Endothelial cell of umbilical vein (primary cell): ENCODE measurements at regions of chr15 and their contacts with region 1.

Region 1: DNA sequence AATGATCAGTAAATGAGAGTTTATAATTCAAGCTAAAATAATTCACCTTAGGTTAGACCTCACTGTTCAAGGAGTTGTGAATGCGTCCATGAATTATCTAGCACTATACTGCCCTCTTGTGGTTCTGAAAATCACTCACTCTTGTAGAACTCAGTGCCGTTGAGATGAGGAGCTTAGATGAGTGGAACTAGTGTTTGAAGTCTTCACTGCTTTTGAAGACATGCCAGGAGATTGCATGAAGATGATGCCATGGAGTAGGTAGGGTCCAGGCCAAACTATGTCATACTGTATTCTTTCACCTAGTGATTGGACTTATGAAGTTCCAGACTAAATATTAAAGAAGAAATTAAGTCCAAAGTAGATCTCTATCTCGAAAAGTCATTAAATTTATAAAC is 28.8 kb downstream of the LYSMD4 start:
- DNase-seq: peak; percentile 92
- H3K4me3 ChIP-seq: no peak overlapping the region
- H3K27ac ChIP-seq: peak overlapping the region; percentile 75
- H3K4me1 ChIP-seq: peaks cover 46% of the 10 kb centered on the region
- H3K27me3 ChIP-seq: no peaks in the 10 kb centered on the region
- CTCF ChIP-seq: peak; percentile 50 to 61
- POLR2A ChIP-seq: no peak

Region 2: GRCh38 chr15:99250494-99251435 is 453.7 kb before region 1 on chr15:
- CTCF ChIA-PET with region 1: interaction called, 19 read pairs
- POLR2A ChIA-PET with region 1: no interaction called
- dilution Hi-C with region 1: no loop called
- intact Hi-C with region 1: loop called (anchors 1 kb)
- DNase-seq: peak; percentile 100
- H3K4me3 ChIP-seq: peak overlapping the region; percentile 77 to 100 (median 80)
- H3K27ac ChIP-seq: peak overlapping the region; percentile 89
- H3K4me1 ChIP-seq: peaks cover 30% of the 10 kb centered on the region
- H3K27me3 ChIP-seq: no peaks in the 10 kb centered on the region
- CTCF ChIP-seq: no peak
- POLR2A ChIP-seq: peak; percentile 89

Region 3: GRCh38 chr15:99333413-99333812 is 371.0 kb before region 1 on chr15:
- CTCF ChIA-PET with region 1: interaction called, 103 read pairs
- POLR2A ChIA-PET with region 1: no interaction called
- dilution Hi-C with region 1: no loop called
- intact Hi-C with region 1: no loop called
- DNase-seq: peak; percentile 20
- H3K4me3 ChIP-seq: no peak overlapping the region
- H3K27ac ChIP-seq: no peak overlapping the region
- H3K4me1 ChIP-seq: peaks cover 13% of the 10 kb centered on the region
- H3K27me3 ChIP-seq: no peaks in the 10 kb centered on the region
- CTCF ChIP-seq: no peak
- POLR2A ChIP-seq: no peak

Region 4: GRCh38 chr15:99409097-99409473 is 295.4 kb before region 1 on chr15:
- CTCF ChIA-PET with region 1: interaction called, 121 read pairs
- POLR2A ChIA-PET with region 1: interaction called, 3 read pairs
- dilution Hi-C with region 1: no loop called
- intact Hi-C with region 1: loop called (anchors 1 kb)
- DNase-seq: peak; percentile 40
- H3K4me3 ChIP-seq: no peak overlapping the region
- H3K27ac ChIP-seq: no peak overlapping the region
- H3K4me1 ChIP-seq: no peaks in the 10 kb centered on the region
- H3K27me3 ChIP-seq: no peaks in the 10 kb centered on the region
- CTCF ChIP-seq: peak; percentile 30 to 53
- POLR2A ChIP-seq: no peak

Region 5: GRCh38 chr15:99486371-99487336 is 217.8 kb before region 1 on chr15:
- CTCF ChIA-PET with region 1: interaction called, 24 read pairs
- POLR2A ChIA-PET with region 1: no interaction called
- dilution Hi-C with region 1: no loop called
- intact Hi-C with region 1: no loop called
- DNase-seq: peak; percentile 61
- H3K4me3 ChIP-seq: peak overlapping the region; percentile 26 to 53 (median 32)
- H3K27ac ChIP-seq: no peak overlapping the region
- H3K4me1 ChIP-seq: peaks cover 18% of the 10 kb centered on the region
- H3K27me3 ChIP-seq: no peaks in the 10 kb centered on the region
- CTCF ChIP-seq: no peak
- POLR2A ChIP-seq: no peak

Region 6: DNA sequence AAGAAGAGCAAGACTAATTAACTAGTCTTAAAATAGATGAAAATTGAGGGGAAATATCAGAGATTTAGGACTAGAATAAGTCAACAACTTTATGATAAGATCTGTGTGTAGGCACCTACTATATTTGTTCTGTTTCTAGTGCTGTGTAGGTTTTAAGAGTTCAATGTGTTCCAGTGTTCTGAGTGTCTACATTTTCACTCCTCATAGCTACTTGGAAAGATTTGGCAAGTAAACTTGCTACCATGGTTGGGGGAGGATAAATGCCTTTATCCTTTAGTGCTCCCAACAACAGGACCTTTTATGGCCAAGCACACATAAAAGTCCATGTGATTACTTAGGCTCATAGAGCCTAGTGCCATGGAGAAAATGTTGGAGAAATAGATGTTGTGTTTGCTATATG is 35.2 kb before region 1 on chr15:
- CTCF ChIA-PET with region 1: interaction called, 12 read pairs
- POLR2A ChIA-PET with region 1: no interaction called
- dilution Hi-C with region 1: no loop called
- intact Hi-C with region 1: no loop called
- DNase-seq: no peak
- H3K4me3 ChIP-seq: no peak overlapping the region
- H3K27ac ChIP-seq: no peak overlapping the region
- H3K4me1 ChIP-seq: no peaks in the 10 kb centered on the region
- H3K27me3 ChIP-seq: no peaks in the 10 kb centered on the region
- CTCF ChIP-seq: no peak
- POLR2A ChIP-seq: no peak

Region 7: GRCh38 chr15:100008258-100008657 is 303.8 kb after region 1 on chr15:
- CTCF ChIA-PET with region 1: no interaction called
- POLR2A ChIA-PET with region 1: no interaction called
- dilution Hi-C with region 1: no loop called
- intact Hi-C with region 1: no loop called
- DNase-seq: no peak
- H3K4me3 ChIP-seq: no peak overlapping the region
- H3K27ac ChIP-seq: no peak overlapping the region
- H3K4me1 ChIP-seq: no peaks in the 10 kb centered on the region
- H3K27me3 ChIP-seq: no peaks in the 10 kb centered on the region
- CTCF ChIP-seq: no peak
- POLR2A ChIP-seq: no peak

Region 8: DNA sequence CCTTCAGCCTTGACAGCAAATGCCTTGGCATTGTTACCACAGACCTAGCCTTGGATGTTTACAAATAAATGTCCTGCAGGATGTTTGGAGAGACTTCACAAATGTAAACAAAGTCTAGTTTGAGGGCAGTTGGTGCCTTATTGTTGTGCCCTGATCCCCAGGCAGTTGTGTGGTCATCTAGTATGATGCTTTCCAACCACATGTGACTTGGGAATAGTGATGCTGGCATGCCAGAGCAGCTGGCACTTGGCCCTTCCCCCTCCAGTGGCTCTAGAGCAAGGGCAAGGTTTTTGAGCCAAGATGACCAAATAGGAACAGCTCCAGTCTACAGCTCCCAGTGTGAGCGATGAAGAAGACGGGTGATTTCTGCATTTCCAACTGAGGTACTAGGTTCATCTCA is 379.1 kb after region 1 on chr15:
- CTCF ChIA-PET with region 1: no interaction called
- POLR2A ChIA-PET with region 1: no interaction called
- dilution Hi-C with region 1: no loop called
- intact Hi-C with region 1: no loop called
- DNase-seq: no peak
- H3K4me3 ChIP-seq: no peak overlapping the region
- H3K27ac ChIP-seq: no peak overlapping the region
- H3K4me1 ChIP-seq: no peaks in the 10 kb centered on the region
- H3K27me3 ChIP-seq: no peaks in the 10 kb centered on the region
- CTCF ChIP-seq: no peak
- POLR2A ChIP-seq: no peak